ENCODE measurements at regions of chr5 and their contacts with region 1.

Region 1: DNA sequence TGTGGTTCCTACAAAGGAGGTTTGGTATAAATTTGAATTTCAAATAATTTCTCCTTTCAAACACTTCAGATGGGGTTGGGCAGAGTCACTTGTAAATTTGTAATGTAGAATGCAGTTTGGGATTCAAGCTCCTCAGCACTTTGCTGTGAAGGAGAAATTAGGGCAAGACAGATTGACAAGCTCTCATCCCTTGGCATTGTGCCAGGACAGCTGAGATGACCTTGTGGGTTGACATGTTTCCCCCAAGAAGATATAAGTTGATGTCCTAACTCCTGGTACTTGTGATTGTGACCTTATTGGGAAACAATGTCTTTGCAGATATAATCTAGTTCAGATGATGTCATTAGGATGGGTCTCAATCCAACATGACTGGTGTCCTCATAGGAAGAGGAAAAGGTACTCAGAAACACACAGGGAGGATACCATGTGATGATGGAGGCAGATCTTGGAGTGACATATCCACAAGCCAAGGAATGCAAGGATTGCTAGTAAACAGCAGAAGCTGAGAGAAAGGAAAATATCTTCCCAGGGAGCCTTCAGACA is 408.3 kb downstream of the MED10 start:
- DNase-seq: no peak
- H3K4me3 ChIP-seq: no peak overlapping the region
- H3K27ac ChIP-seq: no peak overlapping the region
- H3K4me1 ChIP-seq: no peaks in the 10 kb centered on the region
- H3K27me3 ChIP-seq: peaks cover 0 to 5% of the 10 kb centered on the region in 2 donors
- CTCF ChIP-seq: no peak
- POLR2A ChIP-seq: no peak

Region 2: DNA sequence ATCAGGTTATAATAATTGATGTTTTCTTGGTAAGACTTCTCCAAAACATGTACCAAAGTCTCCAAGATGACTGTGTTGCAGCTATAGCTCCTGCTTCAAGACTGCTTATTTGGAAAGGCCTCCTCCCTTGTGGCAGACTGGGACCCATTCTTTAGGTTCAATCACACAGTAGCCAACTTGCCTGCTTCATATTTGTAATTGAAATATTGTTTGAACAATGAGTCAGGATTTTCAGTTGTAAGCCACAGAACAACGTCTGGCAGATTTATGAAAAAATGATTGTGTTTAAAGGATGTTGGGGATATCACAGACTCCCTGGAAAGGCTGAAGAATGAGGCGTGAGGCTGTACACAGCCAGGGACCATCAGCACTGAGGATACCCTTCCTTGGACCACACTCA is 50.6 kb before region 1 on chr5:
- intact Hi-C with region 1: no loop called
- DNase-seq: no peak
- H3K4me3 ChIP-seq: no peak overlapping the region
- H3K27ac ChIP-seq: no peak overlapping the region
- H3K4me1 ChIP-seq: no peaks in the 10 kb centered on the region
- H3K27me3 ChIP-seq: no peaks in the 10 kb centered on the region
- CTCF ChIP-seq: no peak
- POLR2A ChIP-seq: no peak

Region 3: DNA sequence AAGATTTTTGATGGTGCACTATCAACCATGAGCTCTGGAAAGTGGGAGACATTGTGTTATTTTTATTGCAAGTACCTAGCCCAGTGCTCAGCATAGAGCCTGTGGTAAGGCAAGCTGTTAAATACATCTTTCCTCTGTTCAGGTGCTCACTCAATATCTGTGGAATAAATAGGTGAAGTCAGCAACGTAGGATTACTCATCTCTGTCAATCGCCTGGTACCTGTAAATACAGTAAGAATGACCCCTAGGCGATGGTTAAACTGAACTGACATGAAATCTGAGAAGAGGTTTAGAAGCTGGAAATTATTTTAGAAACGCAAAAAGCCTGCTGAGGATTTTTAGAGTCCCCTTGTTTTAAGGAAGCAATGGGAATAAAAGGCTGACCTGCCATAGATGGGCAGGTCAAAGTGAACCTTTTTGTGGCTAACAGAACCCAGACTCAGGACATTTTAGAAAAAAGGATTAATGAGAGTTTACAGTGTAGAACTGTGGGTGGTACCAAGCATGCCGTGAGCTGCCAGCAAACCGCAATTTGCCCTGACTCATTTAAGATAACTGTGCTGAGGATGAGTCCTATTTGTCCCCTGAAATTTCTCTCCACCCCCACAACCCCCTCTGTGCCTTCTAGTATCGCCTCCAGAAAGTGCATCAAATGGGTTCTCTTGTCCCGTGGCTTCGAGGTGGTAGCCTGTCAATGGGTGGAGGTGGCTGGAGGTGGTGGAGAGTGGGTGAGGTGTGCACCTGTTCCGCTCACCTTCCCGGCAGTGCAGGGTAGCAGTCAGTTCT is 33.2 kb after region 1 on chr5:
- intact Hi-C with region 1: no loop called
- DNase-seq: no peak
- H3K4me3 ChIP-seq: no peak overlapping the region
- H3K27ac ChIP-seq: no peak overlapping the region
- H3K4me1 ChIP-seq: no peaks in the 10 kb centered on the region
- H3K27me3 ChIP-seq: no peaks in the 10 kb centered on the region
- CTCF ChIP-seq: no peak
- POLR2A ChIP-seq: no peak

Region 4: DNA sequence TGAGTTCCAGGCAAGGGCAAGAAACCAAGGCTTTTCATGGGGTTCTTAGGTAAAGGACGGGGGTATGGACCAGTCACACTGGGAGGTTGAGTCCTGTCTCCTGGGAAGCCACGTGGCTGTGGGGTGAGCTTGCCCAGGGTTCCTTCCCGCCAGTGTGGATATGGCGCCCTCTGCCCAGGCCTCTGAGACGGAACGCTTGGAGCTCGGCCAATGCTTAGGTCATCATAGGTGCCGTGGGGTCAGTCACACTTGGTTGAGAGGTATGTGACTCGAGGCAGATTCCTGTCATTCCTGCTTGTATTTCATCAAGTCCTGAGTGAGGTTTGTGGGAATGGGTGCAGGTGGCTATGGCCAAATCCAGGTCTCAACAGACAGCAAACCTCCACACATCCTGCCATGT is 789.4 kb after region 1 on chr5:
- intact Hi-C with region 1: loop called (anchors 5 kb)
- DNase-seq: no peak
- H3K4me3 ChIP-seq: no peak overlapping the region
- H3K27ac ChIP-seq: no peak overlapping the region
- H3K4me1 ChIP-seq: no peaks in the 10 kb centered on the region
- H3K27me3 ChIP-seq: no peaks in the 10 kb centered on the region
- CTCF ChIP-seq: no peak
- POLR2A ChIP-seq: no peak